Caco-2 (cell line): ENCODE measurements at regions of chr12 and their contacts with region 1.

Region 1: DNA sequence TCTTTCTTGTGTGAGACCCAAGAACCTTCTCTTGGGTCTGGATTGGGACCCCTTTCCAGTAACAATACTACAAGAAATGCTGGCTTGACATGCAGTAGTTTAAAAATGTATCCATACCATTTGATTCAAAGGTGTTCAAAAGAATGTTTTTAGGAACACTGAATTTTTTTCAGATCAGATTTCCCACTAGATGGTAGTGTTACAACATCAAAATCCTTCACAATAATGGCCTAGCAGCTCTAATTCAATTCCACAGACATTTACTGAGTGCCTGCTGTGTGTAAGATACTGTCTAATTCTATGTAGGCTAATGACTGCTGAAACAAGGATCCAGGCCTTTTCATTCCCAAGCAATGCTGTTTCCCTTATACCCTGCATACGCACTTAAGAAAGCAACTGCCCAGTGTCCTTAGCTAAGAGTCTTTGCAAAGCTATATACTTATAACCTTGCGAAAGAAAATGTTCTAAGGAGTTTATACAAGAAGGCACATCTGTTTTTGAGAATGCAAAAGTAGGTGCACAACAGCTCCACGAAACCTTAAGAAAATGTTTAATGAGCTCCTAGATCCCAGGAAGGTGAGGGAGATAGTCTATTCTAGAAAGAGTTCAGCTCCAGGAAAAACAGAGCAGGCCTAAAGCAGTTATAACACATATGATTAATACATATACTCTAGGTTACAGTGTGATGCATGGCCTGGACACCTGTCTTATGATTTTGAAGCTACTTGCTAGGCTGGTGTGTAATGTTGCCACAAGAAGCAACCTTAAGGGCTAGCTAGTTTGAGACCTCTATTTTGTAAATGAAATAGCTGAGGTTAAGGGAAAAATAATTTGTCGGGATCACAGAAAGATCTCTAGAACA is 50.9 kb upstream of the PKP2 start:
- DNase-seq: peak in 1 of 2 experiments; percentile 63
- H3K4me3 ChIP-seq: no peak overlapping the region
- H3K4me3 Mint-ChIP-seq: no peak overlapping the region
- H3K27ac Mint-ChIP-seq: peak overlapping the region; percentile 12
- H3K4me1 ChIP-seq: peaks cover 16% of the 10 kb centered on the region
- H3K4me1 Mint-ChIP-seq: peaks cover 12% of the 10 kb centered on the region
- H3K27me3 ChIP-seq: no peaks in the 10 kb centered on the region
- H3K27me3 Mint-ChIP-seq: no peaks in the 10 kb centered on the region
- CTCF ChIP-seq: peak in 1 of 2 experiments; percentile 21

Region 2: GRCh38 chr12:32843528-32844095 is 103.8 kb before region 1 on chr12:
- CTCF ChIA-PET with region 1: no interaction called
- POLR2A ChIA-PET with region 1: no interaction called
- intact Hi-C with region 1: no loop called
- DNase-seq: no peak
- H3K4me3 ChIP-seq: no peak overlapping the region
- H3K4me3 Mint-ChIP-seq: no peak overlapping the region
- H3K27ac Mint-ChIP-seq: peak overlapping the region; percentile 21
- H3K4me1 ChIP-seq: peaks cover 18% of the 10 kb centered on the region; the same call in 1 of the 2 replicates
- H3K4me1 Mint-ChIP-seq: peaks cover 13% of the 10 kb centered on the region
- H3K27me3 ChIP-seq: no peaks in the 10 kb centered on the region
- H3K27me3 Mint-ChIP-seq: no peaks in the 10 kb centered on the region
- CTCF ChIP-seq: no peak

Region 3: DNA sequence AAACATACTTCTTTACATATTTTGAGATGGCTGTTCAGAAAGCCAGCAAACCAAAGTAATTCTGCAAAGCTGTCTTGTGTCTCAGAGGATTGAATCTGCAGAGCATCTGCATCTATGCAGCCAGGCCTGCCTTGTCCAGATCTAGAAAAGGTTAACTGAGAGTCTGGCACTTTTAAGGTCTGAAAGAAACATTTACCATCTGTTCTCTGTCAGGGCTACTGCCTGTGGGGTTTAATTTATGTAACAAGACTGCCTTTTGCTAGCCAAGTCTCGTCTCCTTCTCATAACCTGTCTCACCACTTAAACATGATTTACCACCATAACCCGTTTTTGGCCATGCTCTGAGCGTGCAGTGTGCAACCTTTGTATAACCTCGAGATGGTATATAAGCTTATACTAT is 298.0 kb after region 1 on chr12:
- CTCF ChIA-PET with region 1: no interaction called
- POLR2A ChIA-PET with region 1: no interaction called
- intact Hi-C with region 1: loop called (anchors 5 kb)
- DNase-seq: no peak
- H3K4me3 ChIP-seq: no peak overlapping the region
- H3K4me3 Mint-ChIP-seq: no peak overlapping the region
- H3K27ac Mint-ChIP-seq: no peak overlapping the region
- H3K4me1 ChIP-seq: peaks cover 18% of the 10 kb centered on the region
- H3K4me1 Mint-ChIP-seq: peaks cover 11% of the 10 kb centered on the region
- H3K27me3 ChIP-seq: no peaks in the 10 kb centered on the region
- H3K27me3 Mint-ChIP-seq: no peaks in the 10 kb centered on the region
- CTCF ChIP-seq: no peak

Region 4: GRCh38 chr12:33370318-33370717 is 422.9 kb after region 1 on chr12:
- CTCF ChIA-PET with region 1: no interaction called
- POLR2A ChIA-PET with region 1: no interaction called
- intact Hi-C with region 1: loop called (anchors 5 kb)
- DNase-seq: no peak
- H3K4me3 ChIP-seq: no peak overlapping the region
- H3K4me3 Mint-ChIP-seq: no peak overlapping the region
- H3K27ac Mint-ChIP-seq: no peak overlapping the region
- H3K4me1 ChIP-seq: peaks cover under 1% of the 10 kb centered on the region; the same call in 1 of the 2 replicates
- H3K4me1 Mint-ChIP-seq: no peaks in the 10 kb centered on the region
- H3K27me3 ChIP-seq: no peaks in the 10 kb centered on the region
- H3K27me3 Mint-ChIP-seq: no peaks in the 10 kb centered on the region
- CTCF ChIP-seq: no peak

Region 5: DNA sequence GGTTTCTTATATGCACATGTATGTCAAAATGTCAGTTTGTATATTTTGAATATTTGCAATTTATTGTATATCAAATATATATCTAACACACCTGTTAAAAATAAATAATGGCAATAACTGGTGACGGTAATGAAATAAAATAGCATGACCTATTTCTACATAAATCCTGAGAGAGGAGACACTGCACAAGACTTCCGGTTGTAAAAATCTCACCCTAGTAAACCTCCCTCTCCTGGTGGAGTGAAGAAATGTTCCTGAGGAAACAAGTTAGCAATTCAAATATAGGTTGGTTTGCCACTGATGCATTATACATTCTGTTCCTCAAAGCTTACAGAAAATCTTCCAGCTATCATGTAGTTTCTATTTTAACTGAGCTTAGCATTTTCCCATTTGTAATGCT is 658.3 kb after region 1 on chr12:
- CTCF ChIA-PET with region 1: interaction called, 3 read pairs
- POLR2A ChIA-PET with region 1: no interaction called
- intact Hi-C with region 1: loop called (anchors 1 kb)
- DNase-seq: peak in 1 of 2 experiments; percentile 43
- H3K4me3 ChIP-seq: no peak overlapping the region
- H3K4me3 Mint-ChIP-seq: no peak overlapping the region
- H3K27ac Mint-ChIP-seq: no peak overlapping the region
- H3K4me1 ChIP-seq: no peaks in the 10 kb centered on the region
- H3K4me1 Mint-ChIP-seq: no peaks in the 10 kb centered on the region
- H3K27me3 ChIP-seq: no peaks in the 10 kb centered on the region
- H3K27me3 Mint-ChIP-seq: peaks cover 11% of the 10 kb centered on the region
- CTCF ChIP-seq: peak; percentile 56 to 62